Activated CD4-positive, alpha-beta T cell treated with anti-CD3 and anti-CD28 coated beads, Interleukin-2, amount 10 ng/mL, durations not matched to agents 24 days and 14 days (primary cell): ENCODE measurements at regions of chrX and their contacts with region 1.

Region 1: GRCh38 chrX:56978172-56978571 is 17.2 kb downstream of the SPIN3 start:
- DNase-seq: peak; percentile 83
- H3K4me3 Mint-ChIP-seq: no peak overlapping the region
- H3K27ac Mint-ChIP-seq: no peak overlapping the region
- H3K4me1 Mint-ChIP-seq: peaks cover 2% of the 10 kb centered on the region
- H3K27me3 Mint-ChIP-seq: no peaks in the 10 kb centered on the region

Region 2: GRCh38 chrX:56788717-56789122 is 189.5 kb before region 1 on chrX:
- intact Hi-C with region 1: loop called (anchors 1 kb)
- DNase-seq: peak; percentile 84
- H3K4me3 Mint-ChIP-seq: no peak overlapping the region
- H3K27ac Mint-ChIP-seq: peak overlapping the region; percentile 39
- H3K4me1 Mint-ChIP-seq: peaks cover 17% of the 10 kb centered on the region
- H3K27me3 Mint-ChIP-seq: no peaks in the 10 kb centered on the region

Region 3: DNA sequence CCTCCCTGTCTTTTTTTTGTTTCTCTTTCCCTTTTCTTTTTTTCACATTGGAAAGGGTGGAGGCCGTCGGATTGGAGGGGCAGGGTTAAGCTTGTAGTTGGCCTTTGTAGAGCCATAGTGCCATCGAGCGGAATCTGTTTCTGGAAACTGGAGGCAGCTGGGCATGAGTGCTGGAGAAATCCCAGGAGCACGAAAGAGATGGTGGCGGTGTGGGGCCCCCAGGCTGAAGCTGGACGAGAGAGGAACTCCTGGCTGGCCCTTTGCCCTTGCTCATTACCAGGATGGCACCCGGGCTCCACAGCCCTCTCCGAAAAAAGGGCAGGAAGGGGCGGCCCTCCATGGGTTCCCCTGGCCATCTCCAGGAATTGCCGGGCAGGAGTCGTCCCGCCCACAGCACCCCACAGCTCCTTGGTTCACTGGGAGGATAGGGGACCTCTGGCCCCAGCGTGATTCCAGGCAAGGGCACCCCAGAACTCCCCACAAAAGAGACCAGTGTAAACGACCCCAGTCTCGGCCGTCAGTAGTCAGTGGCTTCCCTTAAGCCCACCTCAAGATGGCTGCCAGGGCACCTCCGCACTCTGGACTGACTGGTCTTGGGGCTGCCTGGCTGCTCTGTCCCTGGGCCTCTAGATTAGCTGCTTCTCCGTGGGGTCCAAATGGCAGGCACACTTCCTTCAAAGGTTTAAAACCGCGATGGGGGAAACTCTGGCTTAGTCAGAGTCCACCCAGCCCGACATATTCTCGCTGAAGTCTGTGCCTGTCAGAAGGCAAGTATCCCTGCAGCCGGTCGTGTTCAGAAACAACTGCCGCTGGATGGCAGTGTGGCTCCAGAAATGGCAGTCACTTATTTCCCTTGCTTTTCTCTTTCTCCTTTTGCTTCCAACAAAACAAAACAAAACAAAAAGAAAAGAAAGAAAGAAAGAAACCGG is 175.0 kb before region 1 on chrX:
- intact Hi-C with region 1: loop called (anchors 1 kb)
- DNase-seq: peak; percentile 86
- H3K4me3 Mint-ChIP-seq: peak overlapping the region; percentile 55
- H3K27ac Mint-ChIP-seq: peak overlapping the region; percentile 81
- H3K4me1 Mint-ChIP-seq: peaks cover 34% of the 10 kb centered on the region
- H3K27me3 Mint-ChIP-seq: no peaks in the 10 kb centered on the region

Region 4: GRCh38 chrX:57367649-57368048 is 389.5 kb after region 1 on chrX:
- intact Hi-C with region 1: no loop called
- DNase-seq: no peak
- H3K4me3 Mint-ChIP-seq: no peak overlapping the region
- H3K27ac Mint-ChIP-seq: no peak overlapping the region
- H3K4me1 Mint-ChIP-seq: peaks cover 6% of the 10 kb centered on the region
- H3K27me3 Mint-ChIP-seq: no peaks in the 10 kb centered on the region